Activated CD4-positive, alpha-beta T cell treated with anti-CD3 and anti-CD28 coated beads, Interleukin-2, amount 10 ng/mL, durations not matched to agents 24 days and 14 days (primary cell): ENCODE measurements at regions of chr16 and their contacts with region 1.

Region 1: DNA sequence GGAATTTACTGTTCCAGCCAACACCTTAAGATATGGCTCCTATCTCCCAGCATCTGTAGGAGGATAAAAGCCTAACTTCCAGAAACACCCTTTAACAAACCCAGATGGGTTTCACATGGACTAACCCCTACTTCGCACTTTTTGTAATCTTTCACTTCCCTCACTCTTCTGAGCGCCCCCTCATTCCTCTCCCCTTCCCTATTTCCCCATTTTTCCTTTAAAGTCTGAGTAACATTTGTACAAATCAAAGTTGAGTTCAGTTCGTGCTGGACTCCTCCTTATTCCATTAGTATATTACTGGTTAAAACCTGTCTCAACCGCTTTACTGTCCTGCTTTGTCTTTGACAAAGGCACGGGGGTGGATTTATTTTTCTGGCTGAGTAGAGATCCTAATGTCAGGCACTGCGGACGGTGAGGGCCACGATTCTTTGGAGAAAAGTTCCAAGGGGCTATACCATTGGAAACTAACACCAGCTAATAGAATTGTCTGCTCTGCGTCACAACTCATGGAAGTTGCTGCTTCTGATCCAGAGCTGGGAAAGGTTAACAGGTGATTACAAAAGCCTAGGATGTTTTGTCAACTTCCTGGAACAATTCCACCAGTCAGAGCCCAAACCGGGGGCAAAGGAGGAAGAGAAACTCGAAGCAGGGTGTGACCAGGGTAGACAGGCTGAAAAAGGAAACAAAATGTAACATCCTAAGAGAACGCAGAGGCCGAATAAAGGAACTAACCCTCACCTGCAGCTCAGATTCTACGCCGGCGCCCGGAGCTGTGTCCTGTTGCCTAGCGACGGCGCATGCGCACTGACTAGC is 12.5 kb downstream of the TAT start:
- DNase-seq: no peak
- H3K4me3 Mint-ChIP-seq: peak overlapping the region; percentile 87
- H3K27ac Mint-ChIP-seq: peak overlapping the region; percentile 91
- H3K4me1 Mint-ChIP-seq: peaks cover 15% of the 10 kb centered on the region
- H3K27me3 Mint-ChIP-seq: peaks cover 7% of the 10 kb centered on the region

Region 2: DNA sequence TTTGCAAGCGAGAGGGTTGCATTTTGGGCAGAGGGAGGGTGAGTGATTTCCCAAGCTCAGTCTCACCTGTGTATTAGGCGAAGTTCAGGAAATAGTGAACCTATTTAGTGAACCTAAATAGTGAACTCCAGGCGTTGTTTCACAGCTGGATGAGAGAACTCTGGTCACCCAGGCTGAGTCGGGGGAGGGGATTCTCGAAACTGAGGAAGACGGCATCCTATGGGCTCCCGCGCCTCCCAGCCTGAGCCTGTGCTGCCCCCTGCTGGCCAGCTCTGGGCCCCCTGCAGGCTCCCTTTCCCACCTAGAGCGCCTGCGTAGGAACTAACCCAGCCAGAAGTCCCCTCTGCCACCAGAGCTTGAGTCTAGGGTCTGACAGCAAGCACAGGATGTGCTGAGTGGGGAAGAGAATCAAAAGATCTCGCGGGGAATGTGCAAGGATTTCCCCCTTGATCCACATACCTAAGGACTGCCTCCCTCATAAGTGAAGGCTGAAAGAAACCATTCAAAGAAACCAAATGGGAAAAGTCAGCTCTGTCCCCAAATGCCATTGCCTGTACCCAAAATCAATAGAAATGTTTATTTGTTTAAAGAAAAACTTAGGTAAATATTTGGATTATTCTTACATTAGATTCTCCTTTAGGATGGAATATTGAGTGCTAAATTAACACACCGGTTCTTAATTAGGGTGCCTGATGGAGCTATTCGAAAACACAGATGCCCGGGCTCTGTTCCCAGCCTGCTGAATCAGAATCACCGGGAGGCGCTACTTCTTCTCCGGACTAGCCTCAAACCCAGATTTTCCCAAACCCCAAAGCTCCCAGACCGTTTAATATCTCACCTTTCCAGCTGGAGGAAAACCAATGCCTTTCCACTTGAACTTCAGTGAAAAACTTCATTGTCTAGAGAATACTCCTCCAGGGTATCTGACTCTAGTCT is 46.8 kb after region 1 on chr16:
- intact Hi-C with region 1: loop called (anchors 1 kb)
- DNase-seq: peak; percentile 93
- H3K4me3 Mint-ChIP-seq: peak overlapping the region; percentile 41
- H3K27ac Mint-ChIP-seq: no peak overlapping the region
- H3K4me1 Mint-ChIP-seq: peaks cover 10% of the 10 kb centered on the region
- H3K27me3 Mint-ChIP-seq: peaks cover 4% of the 10 kb centered on the region

Region 3: DNA sequence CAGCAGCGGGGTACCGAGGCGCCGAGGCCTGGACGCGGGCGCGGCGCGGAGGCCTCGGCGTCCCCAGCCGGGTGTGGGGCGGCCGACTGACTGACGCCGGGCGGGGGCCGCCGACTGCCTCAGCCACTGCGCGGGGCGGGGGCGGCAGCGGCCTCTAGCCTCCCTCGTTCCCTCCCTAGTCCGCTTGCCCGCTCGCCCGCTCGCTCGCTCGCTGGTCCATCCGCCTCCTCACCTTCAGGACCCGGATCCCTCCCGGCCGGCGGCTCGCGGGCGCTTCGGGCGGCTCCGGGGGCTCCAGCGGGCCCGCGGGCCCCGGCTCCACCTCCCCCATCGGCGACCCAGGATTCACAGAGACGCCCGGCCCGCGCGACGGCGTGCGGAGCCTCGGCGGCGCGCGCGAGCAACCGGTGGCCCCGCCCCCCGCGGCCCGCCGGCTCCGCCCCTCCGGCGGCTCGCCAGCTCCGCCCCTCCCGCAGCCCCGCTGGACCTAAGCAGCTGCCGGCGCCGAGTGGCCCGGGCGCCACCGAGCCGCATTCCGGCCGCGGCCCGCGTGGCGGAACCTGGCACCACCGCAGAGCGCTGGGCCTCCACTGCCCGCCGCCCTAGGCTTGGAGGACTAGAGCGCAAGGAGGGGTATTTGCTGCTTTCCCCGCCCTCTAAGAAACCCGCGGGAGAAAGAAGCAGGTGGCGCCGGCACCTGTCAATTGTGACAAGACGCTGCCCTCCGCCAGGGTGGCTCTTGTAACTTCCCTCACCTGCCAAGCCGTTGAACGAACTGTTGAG is 159.4 kb after region 1 on chr16:
- intact Hi-C with region 1: loop called (anchors 10 kb)
- DNase-seq: peak; percentile 94
- H3K4me3 Mint-ChIP-seq: peak overlapping the region; percentile 79
- H3K27ac Mint-ChIP-seq: peak overlapping the region; percentile 53
- H3K4me1 Mint-ChIP-seq: peaks cover 13% of the 10 kb centered on the region
- H3K27me3 Mint-ChIP-seq: peaks cover 13% of the 10 kb centered on the region